ENCODE measurements at regions of chr2 and their contacts with region 1.

Region 1: DNA sequence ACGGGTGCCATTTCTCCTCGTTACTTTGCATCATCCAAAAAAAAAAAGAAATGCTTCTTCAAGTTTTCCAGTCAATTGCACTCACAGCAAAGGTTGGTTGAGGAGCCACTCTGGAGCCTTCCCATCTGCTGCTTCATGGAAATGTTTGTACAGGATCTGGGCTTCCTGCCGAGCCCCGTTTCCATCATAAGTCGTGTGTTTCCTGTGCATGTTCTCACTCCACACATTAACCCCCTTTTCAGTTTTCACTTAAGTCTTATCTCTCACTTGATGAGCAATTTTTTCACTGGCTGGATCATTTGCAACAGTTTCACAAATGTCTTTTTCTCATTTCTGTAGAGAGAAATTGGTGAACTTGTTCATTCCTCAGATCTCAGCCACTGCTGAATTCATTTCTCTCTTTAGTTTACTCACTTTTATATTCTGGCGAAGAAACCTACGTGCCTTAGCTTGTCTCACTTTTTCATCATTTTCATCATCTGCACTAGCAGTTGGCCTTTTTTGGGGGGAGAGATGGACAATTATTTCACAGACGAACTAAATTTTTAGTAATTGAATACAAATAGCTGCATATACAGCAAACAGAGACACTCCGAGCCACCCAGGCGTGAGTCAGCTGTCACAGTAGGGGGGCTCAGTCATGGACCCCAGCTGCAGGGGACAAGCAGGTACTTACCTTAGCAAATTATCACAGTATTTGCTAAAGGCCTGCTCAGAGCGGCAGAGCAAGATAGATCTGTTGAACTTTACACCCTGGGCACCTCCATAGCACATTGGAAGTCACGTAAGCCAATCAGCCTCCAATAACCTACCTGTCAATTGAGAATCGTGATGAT is 750.8 kb upstream of the ID2 start:
- DNase-seq: peak; percentile 62
- H3K4me3 Mint-ChIP-seq: peak overlapping the region; percentile 1
- H3K27ac Mint-ChIP-seq: peak overlapping the region; percentile 88
- H3K4me1 Mint-ChIP-seq: peaks cover 31% of the 10 kb centered on the region
- H3K27me3 Mint-ChIP-seq: peaks cover 3% of the 10 kb centered on the region

Region 2: GRCh38 chr2:7437716-7438632 is 493.0 kb before region 1 on chr2:
- CTCF ChIA-PET with region 1: no interaction called
- POLR2A ChIA-PET with region 1: no interaction called
- intact Hi-C with region 1: loop called (anchors 2 kb)
- DNase-seq: peak; percentile 65
- H3K4me3 Mint-ChIP-seq: peak overlapping the region; percentile 29
- H3K27ac Mint-ChIP-seq: peak overlapping the region; percentile 91
- H3K4me1 Mint-ChIP-seq: peaks cover 74% of the 10 kb centered on the region
- H3K27me3 Mint-ChIP-seq: peaks cover 7% of the 10 kb centered on the region

Region 3: DNA sequence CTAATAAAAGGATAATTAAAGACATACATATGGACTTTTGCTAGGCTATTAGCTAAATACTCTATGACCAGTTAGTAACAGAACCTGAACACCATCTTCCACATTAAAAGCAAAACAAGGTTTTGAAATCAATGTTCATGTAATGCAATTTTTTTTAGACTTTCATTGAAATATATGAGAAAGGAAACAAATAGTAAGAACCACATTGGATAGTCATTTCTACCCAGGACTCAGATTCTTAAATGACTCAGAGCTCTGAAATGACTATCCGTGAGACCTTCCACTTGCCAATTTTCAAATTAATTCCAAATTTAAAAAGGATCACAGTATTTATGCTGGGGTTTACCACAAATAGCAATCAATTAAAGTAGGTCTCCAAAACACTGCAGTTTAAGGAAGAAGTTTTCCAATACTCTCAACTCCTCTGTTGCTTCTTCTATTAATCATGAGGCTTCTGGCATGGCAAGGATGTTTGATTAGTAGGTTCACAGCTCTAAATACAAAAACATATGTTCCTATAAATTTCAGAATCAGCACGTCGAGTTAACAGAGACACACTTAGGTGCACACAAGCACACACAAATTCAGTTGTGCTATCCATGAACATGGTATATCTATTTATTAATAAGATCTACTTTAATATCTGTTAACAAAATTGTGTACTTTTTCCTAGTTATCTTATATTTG is 172.8 kb before region 1 on chr2:
- CTCF ChIA-PET with region 1: no interaction called
- POLR2A ChIA-PET with region 1: no interaction called
- intact Hi-C with region 1: loop called (anchors 2 kb)
- DNase-seq: no peak
- H3K4me3 Mint-ChIP-seq: no peak overlapping the region
- H3K27ac Mint-ChIP-seq: no peak overlapping the region
- H3K4me1 Mint-ChIP-seq: peaks cover 18% of the 10 kb centered on the region
- H3K27me3 Mint-ChIP-seq: peaks cover 20% of the 10 kb centered on the region

Region 4: DNA sequence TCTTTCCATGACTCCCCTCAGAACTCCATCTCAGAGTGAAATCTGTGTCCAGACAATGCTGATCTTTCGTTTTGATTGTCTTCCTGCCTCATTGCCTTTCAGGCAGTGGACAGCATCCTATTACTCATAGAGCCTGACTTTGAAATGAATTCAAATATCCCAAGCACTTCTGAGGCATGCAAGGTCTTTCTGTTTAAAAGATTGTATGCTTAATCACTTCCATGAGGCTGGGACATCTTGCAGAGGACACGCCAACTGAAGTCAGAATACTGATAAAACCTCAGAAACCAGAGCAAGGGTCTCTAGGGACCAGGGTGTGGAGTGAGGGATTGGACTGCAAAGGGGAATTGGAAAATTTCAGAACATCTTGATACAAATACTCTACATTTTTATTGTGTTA is 85.7 kb before region 1 on chr2:
- CTCF ChIA-PET with region 1: interaction called, 4 read pairs
- POLR2A ChIA-PET with region 1: no interaction called
- intact Hi-C with region 1: loop called (anchors 1 kb)
- DNase-seq: no peak
- H3K4me3 Mint-ChIP-seq: no peak overlapping the region
- H3K27ac Mint-ChIP-seq: no peak overlapping the region
- H3K4me1 Mint-ChIP-seq: peaks cover 36% of the 10 kb centered on the region
- H3K27me3 Mint-ChIP-seq: peaks cover 7% of the 10 kb centered on the region

Region 5: DNA sequence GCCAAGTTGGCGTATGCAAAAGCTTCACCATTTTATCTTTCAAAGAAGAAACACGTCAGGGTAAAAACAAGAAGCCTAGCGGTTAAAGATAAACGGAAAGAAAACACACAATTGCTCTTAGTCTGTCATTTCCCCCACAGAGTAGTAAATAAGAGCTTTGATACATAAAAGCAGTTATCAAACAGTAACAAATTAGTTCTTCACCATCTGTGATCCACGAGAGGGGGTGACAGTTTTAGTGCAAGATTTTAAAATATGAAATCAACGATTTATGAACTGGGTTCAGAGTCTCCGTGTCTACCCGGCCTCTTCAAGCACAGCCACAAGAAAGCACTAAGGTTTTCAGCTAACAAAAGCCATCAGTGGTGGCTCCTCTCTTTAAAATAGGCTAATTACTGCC is 47.0 kb after region 1 on chr2:
- CTCF ChIA-PET with region 1: no interaction called
- POLR2A ChIA-PET with region 1: no interaction called
- intact Hi-C with region 1: no loop called
- DNase-seq: no peak
- H3K4me3 Mint-ChIP-seq: no peak overlapping the region
- H3K27ac Mint-ChIP-seq: no peak overlapping the region
- H3K4me1 Mint-ChIP-seq: peaks cover 11% of the 10 kb centered on the region
- H3K27me3 Mint-ChIP-seq: peaks cover 4% of the 10 kb centered on the region

Region 6: GRCh38 chr2:8152392-8153257 is 221.6 kb after region 1 on chr2:
- CTCF ChIA-PET with region 1: no interaction called
- POLR2A ChIA-PET with region 1: no interaction called
- intact Hi-C with region 1: loop called (anchors 5 kb)
- DNase-seq: no peak
- H3K4me3 Mint-ChIP-seq: no peak overlapping the region
- H3K27ac Mint-ChIP-seq: no peak overlapping the region
- H3K4me1 Mint-ChIP-seq: peaks cover 28% of the 10 kb centered on the region
- H3K27me3 Mint-ChIP-seq: no peaks in the 10 kb centered on the region

Region 7: GRCh38 chr2:8477552-8478470 is 546.8 kb after region 1 on chr2:
- CTCF ChIA-PET with region 1: no interaction called
- POLR2A ChIA-PET with region 1: no interaction called
- intact Hi-C with region 1: loop called (anchors 5 kb)
- DNase-seq: peak; percentile 51
- H3K4me3 Mint-ChIP-seq: peak overlapping the region; percentile 60
- H3K27ac Mint-ChIP-seq: peak overlapping the region; percentile 90
- H3K4me1 Mint-ChIP-seq: peaks cover 91% of the 10 kb centered on the region
- H3K27me3 Mint-ChIP-seq: no peaks in the 10 kb centered on the region